PC-9 (cell line): ENCODE measurements at regions of chr15 and their contacts with region 1.

Region 1: DNA sequence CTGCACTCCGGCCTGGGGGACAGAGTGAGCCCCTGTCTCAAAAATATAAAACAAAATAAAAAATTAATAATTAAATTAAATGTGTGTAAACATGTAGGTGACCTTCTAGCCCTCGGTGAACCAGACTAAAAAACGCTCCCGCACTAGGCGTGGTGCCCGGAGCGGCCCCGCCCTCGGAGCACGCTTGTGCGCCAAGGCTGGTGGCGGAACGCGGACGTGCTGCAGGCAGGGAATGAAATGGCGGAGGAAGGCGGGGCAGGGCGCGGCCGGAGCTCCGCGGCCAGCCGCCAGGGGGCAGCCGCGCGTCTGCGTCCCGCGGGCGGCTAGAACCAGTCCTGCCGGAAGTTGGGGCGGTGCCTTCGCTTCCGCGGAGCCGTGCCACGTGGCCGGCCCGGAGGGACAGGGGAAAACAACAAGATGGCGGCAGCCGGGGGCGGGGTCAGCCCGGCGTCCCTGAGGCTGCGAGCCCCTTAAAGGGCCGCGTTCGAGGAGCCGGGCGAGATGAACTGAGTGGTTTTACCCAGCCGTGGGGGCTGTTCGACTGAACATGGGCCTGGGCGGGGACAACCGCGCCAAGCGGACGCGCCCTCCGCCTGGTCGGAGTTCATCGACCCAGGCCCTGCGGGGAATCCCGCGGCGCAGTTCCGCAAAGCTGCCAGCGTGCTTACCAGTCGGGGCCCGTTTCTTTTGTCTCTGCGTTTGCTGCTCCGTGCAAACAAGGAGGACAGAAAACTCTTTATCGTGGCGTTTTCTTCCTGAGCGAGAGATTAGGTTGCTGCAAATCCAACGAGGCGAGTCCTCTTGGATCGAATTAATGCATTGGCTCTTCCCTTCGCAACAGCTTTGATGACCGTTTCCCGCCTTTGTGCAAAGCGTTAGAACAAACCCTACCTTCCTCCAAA is 90.9 kb upstream of the CHD2 start:
- DNase-seq: peak; percentile 83 to 98
- H3K4me3 ChIP-seq: peak overlapping the region; percentile 84
- H3K27ac ChIP-seq: peak overlapping the region; percentile 99
- H3K4me1 ChIP-seq: peaks cover 66% of the 10 kb centered on the region
- H3K27me3 ChIP-seq: no peaks in the 10 kb centered on the region
- CTCF ChIP-seq: peak; percentile 81

Region 2: GRCh38 chr15:92473756-92474155 is 335.5 kb before region 1 on chr15:
- CTCF ChIA-PET with region 1: no interaction called
- POLR2A ChIA-PET with region 1: no interaction called
- intact Hi-C with region 1: no loop called
- DNase-seq: no peak
- H3K4me3 ChIP-seq: no peak overlapping the region
- H3K27ac ChIP-seq: no peak overlapping the region
- H3K4me1 ChIP-seq: no peaks in the 10 kb centered on the region
- H3K27me3 ChIP-seq: peaks cover 20% of the 10 kb centered on the region; the same call in 1 of the 2 replicates
- CTCF ChIP-seq: no peak

Region 3: GRCh38 chr15:92820236-92821021 is 11.2 kb after region 1 on chr15:
- CTCF ChIA-PET with region 1: no interaction called
- POLR2A ChIA-PET with region 1: interaction called, 11 read pairs
- intact Hi-C with region 1: loop called (anchors 1 kb)
- DNase-seq: peak; percentile 91 to 96
- H3K4me3 ChIP-seq: peak overlapping the region; percentile 56
- H3K27ac ChIP-seq: peak overlapping the region; percentile 96
- H3K4me1 ChIP-seq: peaks cover 57% of the 10 kb centered on the region
- H3K27me3 ChIP-seq: no peaks in the 10 kb centered on the region
- CTCF ChIP-seq: no peak

Region 4: GRCh38 chr15:92839696-92840095 is 30.5 kb after region 1 on chr15:
- CTCF ChIA-PET with region 1: no interaction called
- POLR2A ChIA-PET with region 1: no interaction called
- intact Hi-C with region 1: loop called (anchors 1 kb)
- DNase-seq: no peak
- H3K4me3 ChIP-seq: no peak overlapping the region
- H3K27ac ChIP-seq: peak overlapping the region; percentile 72
- H3K4me1 ChIP-seq: peaks cover 28% of the 10 kb centered on the region
- H3K27me3 ChIP-seq: no peaks in the 10 kb centered on the region
- CTCF ChIP-seq: no peak

Region 5: GRCh38 chr15:92917606-92918407 is 108.6 kb after region 1 on chr15:
- CTCF ChIA-PET with region 1: no interaction called
- POLR2A ChIA-PET with region 1: interaction called, 5 read pairs
- intact Hi-C with region 1: loop called (anchors 1 kb)
- DNase-seq: peak; percentile 88 to 94
- H3K4me3 ChIP-seq: peak overlapping the region; percentile 42; the same call in 1 of the 2 replicates
- H3K27ac ChIP-seq: peak overlapping the region; percentile 97
- H3K4me1 ChIP-seq: peaks cover 97% of the 10 kb centered on the region
- H3K27me3 ChIP-seq: no peaks in the 10 kb centered on the region
- CTCF ChIP-seq: peak; percentile 91